Gastrocnemius medialis (tissue), 4 donors: ENCODE measurements at regions of chr17 and their contacts with region 1.

Region 1: DNA sequence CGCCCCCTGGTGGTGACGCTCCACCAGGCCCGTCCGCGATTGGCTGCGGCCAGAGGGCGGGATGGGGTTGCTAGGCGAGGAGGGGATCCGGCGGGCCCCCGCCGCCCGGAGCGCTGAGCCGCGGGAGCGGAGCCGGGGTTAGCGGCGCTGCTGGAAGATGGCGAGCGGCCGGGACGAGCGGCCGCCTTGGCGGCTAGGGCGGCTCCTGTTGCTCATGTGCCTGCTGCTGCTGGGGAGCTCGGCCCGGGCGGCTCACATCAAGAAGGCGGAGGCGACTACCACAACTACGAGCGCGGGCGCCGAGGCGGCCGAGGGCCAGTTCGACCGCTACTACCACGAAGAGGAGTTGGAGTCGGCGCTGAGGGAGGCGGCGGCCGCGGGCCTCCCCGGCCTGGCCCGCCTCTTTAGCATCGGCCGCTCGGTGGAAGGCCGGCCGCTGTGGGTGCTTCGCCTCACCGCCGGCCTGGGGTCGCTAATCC is at the start of gene CPD:
- DNase-seq: peak; percentile 95 to 96
- ATAC-seq: peak; percentile 92 to 95
- H3K4me3 ChIP-seq: peak within 1 kb of the TSS; percentile 83 to 95 (median 90)
- H3K27ac ChIP-seq: peak within 1 kb of the TSS; percentile 86 to 93 (median 92)
- H3K4me1 ChIP-seq: peaks cover 37 to 43% of the 10 kb centered on the region in 2 donors
- H3K27me3 ChIP-seq: no peaks in the 10 kb centered on the region
- CTCF ChIP-seq: no peak
- POLR2A ChIP-seq: peak; percentile 89 to 93
- total RNA-seq, gene CPD: 20.8 to 32.4 (median 28.0) TPM

Region 2: GRCh38 chr17:30336369-30337171 is 42.3 kb before region 1 on chr17:
- in situ Hi-C with region 1: no loop called
- intact Hi-C with region 1: loop called (anchors 2 kb)
- DNase-seq: no peak
- ATAC-seq: no peak
- H3K4me3 ChIP-seq: no peak overlapping the region
- H3K27ac ChIP-seq: no peak overlapping the region
- H3K4me1 ChIP-seq: peaks cover 0 to 3% of the 10 kb centered on the region in 2 donors
- H3K27me3 ChIP-seq: no peaks in the 10 kb centered on the region
- CTCF ChIP-seq: peak in 4 of 5 experiments; percentile 36 to 51 (median 38)
- POLR2A ChIP-seq: no peak

Region 3: GRCh38 chr17:30413109-30413508 is 34.2 kb after region 1 on chr17:
- in situ Hi-C with region 1: no loop called
- intact Hi-C with region 1: no loop called
- DNase-seq: no peak
- ATAC-seq: no peak
- H3K4me3 ChIP-seq: no peak overlapping the region
- H3K27ac ChIP-seq: no peak overlapping the region
- H3K4me1 ChIP-seq: no peaks in the 10 kb centered on the region
- H3K27me3 ChIP-seq: no peaks in the 10 kb centered on the region
- CTCF ChIP-seq: no peak
- POLR2A ChIP-seq: no peak

Region 4: DNA sequence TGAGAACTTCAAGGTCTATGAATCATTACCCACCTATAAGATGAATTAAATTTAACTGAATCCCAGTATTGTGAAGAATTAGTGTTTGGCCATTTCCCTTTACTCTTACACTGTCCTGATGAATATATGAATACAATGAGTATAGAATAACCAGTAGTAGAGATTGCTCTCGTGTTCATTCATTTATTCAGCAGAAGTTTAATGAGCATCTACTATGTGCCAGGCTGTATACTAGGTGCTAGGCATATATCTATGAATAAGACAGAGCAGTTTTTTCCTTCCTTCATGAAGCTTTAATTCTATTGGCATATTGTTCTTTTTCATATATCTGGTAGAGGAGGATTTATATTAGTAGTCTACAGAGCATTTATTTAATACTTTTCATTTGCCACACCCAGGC is 104.3 kb after region 1 on chr17:
- in situ Hi-C with region 1: no loop called
- intact Hi-C with region 1: no loop called
- DNase-seq: no peak
- ATAC-seq: no peak
- H3K4me3 ChIP-seq: no peak overlapping the region
- H3K27ac ChIP-seq: no peak overlapping the region
- H3K4me1 ChIP-seq: peaks cover 15% of the 10 kb centered on the region in 2 donors
- H3K27me3 ChIP-seq: no peaks in the 10 kb centered on the region
- CTCF ChIP-seq: no peak
- POLR2A ChIP-seq: no peak